CD14-positive monocyte (primary cell): ENCODE measurements at regions of chr15 and their contacts with region 1.

Region 1: GRCh38 chr15:63157118-63157843 is at the start of gene RPS27L:
- DNase-seq: peak; percentile 75 to 83 (median 79)
- H3K4me3 ChIP-seq: peak within 1 kb of the TSS; percentile 89 to 98 (median 95)
- H3K4me3 Mint-ChIP-seq: peak within 1 kb of the TSS; percentile 99 to 100
- H3K27ac ChIP-seq: peak within 1 kb of the TSS; percentile 95 to 96
- H3K27ac Mint-ChIP-seq: peak within 1 kb of the TSS; percentile 96 to 99 (median 99)
- H3K4me1 ChIP-seq: peaks cover 13 to 22% of the 10 kb centered on the region in 2 donors
- H3K4me1 Mint-ChIP-seq: peaks cover 21% of the 10 kb centered on the region
- H3K27me3 ChIP-seq: no peaks in the 10 kb centered on the region
- H3K27me3 Mint-ChIP-seq: no peaks in the 10 kb centered on the region
- CTCF ChIP-seq: no peak
- polyA plus RNA-seq, gene RPS27L: 16.1 to 196 (median 178) TPM

Region 2: DNA sequence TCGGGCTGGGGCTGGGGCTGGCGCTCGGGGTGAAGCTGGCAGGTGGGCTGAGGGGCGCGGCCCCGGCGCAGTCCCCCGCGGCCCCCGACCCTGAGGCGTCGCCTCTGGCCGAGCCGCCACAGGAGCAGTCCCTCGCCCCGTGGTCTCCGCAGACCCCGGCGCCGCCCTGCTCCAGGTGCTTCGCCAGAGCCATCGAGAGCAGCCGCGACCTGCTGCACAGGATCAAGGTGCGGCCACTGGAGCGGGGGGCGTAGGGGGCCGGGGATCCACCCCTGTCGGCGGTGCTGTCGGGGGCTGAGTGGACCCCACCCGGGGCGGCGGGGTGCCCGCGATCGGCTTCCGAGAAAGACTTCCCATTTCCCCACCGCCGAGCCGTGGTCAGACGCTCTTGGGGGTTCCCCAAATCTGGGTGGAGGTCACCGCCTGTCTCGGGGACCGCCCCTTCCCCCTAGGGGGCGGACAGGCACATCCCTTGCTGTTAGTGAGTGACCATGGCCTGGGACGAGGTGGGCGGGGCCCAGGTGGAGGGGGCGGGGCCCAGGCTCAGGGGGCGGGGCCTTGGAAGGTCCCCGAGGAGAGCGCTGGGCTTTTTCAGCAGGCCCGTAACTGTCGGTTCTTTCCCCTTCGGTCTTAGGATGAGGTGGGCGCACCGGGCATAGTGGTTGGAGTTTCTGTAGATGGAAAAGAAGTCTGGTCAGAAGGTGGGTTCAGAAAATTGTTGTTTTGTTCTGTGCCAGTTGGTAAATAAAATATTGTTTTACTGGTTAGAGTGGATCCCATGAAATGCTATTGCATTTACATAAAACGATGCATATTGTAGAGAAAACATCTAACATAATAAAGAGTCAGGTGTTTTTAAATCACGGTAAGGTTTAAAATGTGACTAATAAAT is 35.0 kb before region 1 on chr15:
- intact Hi-C with region 1: loop called in 1 of 2 experiments (anchors 5 kb)
- DNase-seq: peak; percentile 96 to 99 (median 97)
- H3K4me3 ChIP-seq: peak overlapping the region; percentile 80 to 86 (median 81)
- H3K4me3 Mint-ChIP-seq: peak overlapping the region; percentile 91 to 97
- H3K27ac ChIP-seq: peak overlapping the region; percentile 92 to 98
- H3K27ac Mint-ChIP-seq: peak overlapping the region; percentile 89 to 96 (median 94)
- H3K4me1 ChIP-seq: peaks cover 12 to 14% of the 10 kb centered on the region in 2 donors
- H3K4me1 Mint-ChIP-seq: peaks cover 21% of the 10 kb centered on the region
- H3K27me3 ChIP-seq: no peaks in the 10 kb centered on the region
- H3K27me3 Mint-ChIP-seq: peaks cover 0 to 2% (median 0%) of the 10 kb centered on the region in 3 donors
- CTCF ChIP-seq: peak; percentile 7

Region 3: DNA sequence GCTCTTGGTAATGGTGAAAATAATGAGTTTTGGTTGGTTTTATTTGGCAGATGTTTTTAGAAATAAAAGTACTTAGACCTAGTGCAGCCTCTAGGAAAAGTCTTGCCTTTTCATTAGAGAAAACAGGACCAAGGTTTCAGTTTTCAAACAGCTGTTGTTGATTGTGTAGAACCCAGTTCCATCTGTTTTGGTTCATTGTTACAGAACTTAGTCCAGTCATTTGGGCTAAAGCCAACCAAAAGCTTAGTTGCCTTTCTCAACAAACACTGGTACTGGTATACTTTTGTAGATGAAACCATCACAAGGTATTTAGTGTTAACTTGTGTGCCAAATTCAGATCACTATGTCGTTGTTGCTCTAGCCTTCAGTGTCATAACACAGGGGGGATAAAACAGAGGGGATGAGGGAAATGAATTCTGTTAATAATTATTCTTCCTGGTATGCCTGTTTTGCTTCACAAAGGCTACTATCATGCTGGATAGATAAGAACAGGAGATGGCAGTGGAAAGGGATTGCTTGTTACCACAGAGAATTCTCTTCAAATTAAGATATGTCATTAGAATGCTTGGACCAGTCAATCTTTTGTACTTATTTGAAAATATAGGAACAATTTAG is 107.5 kb after region 1 on chr15:
- intact Hi-C with region 1: no loop called
- DNase-seq: no peak
- H3K4me3 ChIP-seq: no peak overlapping the region
- H3K4me3 Mint-ChIP-seq: no peak overlapping the region
- H3K27ac ChIP-seq: peak overlapping the region in 1 of 2 donors; percentile 3
- H3K27ac Mint-ChIP-seq: no peak overlapping the region
- H3K4me1 ChIP-seq: no peaks in the 10 kb centered on the region
- H3K4me1 Mint-ChIP-seq: peaks cover 5% of the 10 kb centered on the region
- H3K27me3 ChIP-seq: no peaks in the 10 kb centered on the region
- H3K27me3 Mint-ChIP-seq: peaks cover 0 to under 1% (median 0%) of the 10 kb centered on the region in 3 donors
- CTCF ChIP-seq: no peak